ENCODE measurements at regions of chr2 and their contacts with region 1.

Region 1: GRCh38 chr2:173934895-173935294 is 30.3 kb downstream of the SP3 start:
- DNase-seq: peak; percentile 48 to 58
- H3K4me3 ChIP-seq: no peak overlapping the region
- H3K27ac ChIP-seq: 0 out of 2 replicates have a peak overlapping the region, but pooled peaks have one; percentile 9
- H3K4me1 ChIP-seq: peaks cover 28% of the 10 kb centered on the region
- H3K27me3 ChIP-seq: no peaks in the 10 kb centered on the region
- CTCF ChIP-seq: no peak

Region 2: DNA sequence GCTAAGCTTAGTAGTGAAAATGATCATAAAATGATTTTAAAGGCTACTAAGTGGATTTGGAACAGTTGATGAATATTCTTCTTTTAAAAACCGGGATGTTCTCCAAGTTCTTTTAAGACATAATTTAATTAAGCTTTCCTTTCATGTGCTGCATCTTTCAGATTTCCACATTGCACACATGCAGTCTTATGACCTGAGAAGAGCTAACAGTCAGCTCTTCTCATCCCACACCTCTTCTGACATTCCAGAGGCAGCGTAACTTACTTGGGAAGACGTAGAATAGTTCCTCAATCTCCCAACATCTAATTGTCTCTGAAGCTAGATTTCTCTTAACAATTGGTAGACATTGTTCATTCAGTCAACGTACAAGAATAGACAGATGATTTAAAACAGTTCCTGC is 151.5 kb before region 1 on chr2:
- CTCF ChIA-PET with region 1: no interaction called
- POLR2A ChIA-PET with region 1: no interaction called
- intact Hi-C with region 1: no loop called
- DNase-seq: no peak
- H3K4me3 ChIP-seq: no peak overlapping the region
- H3K27ac ChIP-seq: no peak overlapping the region
- H3K4me1 ChIP-seq: no peaks in the 10 kb centered on the region
- H3K27me3 ChIP-seq: peaks cover 40% of the 10 kb centered on the region; the same call in 1 of the 2 replicates
- CTCF ChIP-seq: no peak

Region 3: GRCh38 chr2:174112073-174112472 is 177.2 kb after region 1 on chr2:
- CTCF ChIA-PET with region 1: no interaction called
- POLR2A ChIA-PET with region 1: interaction called, 16 read pairs
- intact Hi-C with region 1: no loop called
- DNase-seq: no peak
- H3K4me3 ChIP-seq: no peak overlapping the region
- H3K27ac ChIP-seq: no peak overlapping the region
- H3K4me1 ChIP-seq: peaks cover under 1% of the 10 kb centered on the region; the same call in 1 of the 2 replicates
- H3K27me3 ChIP-seq: no peaks in the 10 kb centered on the region
- CTCF ChIP-seq: no peak

Measured in PC-9 (cell line).